ENCODE measurements at regions of chr11 and their contacts with region 1.

Region 1: GRCh38 chr11:82003671-82004515 is 729.8 kb downstream of the FAM181B start:
- DNase-seq: peak; percentile 26
- H3K4me3 Mint-ChIP-seq: no peak overlapping the region
- H3K27ac Mint-ChIP-seq: peak overlapping the region; percentile 73
- H3K4me1 Mint-ChIP-seq: peaks cover 20% of the 10 kb centered on the region
- H3K27me3 Mint-ChIP-seq: no peaks in the 10 kb centered on the region

Region 2: GRCh38 chr11:81963018-81963417 is 40.9 kb before region 1 on chr11:
- CTCF ChIA-PET with region 1: no interaction called
- POLR2A ChIA-PET with region 1: no interaction called
- intact Hi-C with region 1: loop called (anchors 1 kb)
- DNase-seq: no peak
- H3K4me3 Mint-ChIP-seq: no peak overlapping the region
- H3K27ac Mint-ChIP-seq: no peak overlapping the region
- H3K4me1 Mint-ChIP-seq: peaks cover 18% of the 10 kb centered on the region
- H3K27me3 Mint-ChIP-seq: no peaks in the 10 kb centered on the region

Measured in activated CD4-positive, alpha-beta memory T cell treated with anti-CD3 and anti-CD28 coated beads for 36 hours (primary cell).